ENCODE measurements at regions of chr22 and their contacts with region 1.

Region 1: GRCh38 chr22:28283068-28283654 is 364.1 kb upstream of the PITPNB start:
- DNase-seq: no peak
- ATAC-seq: peak in 2 of 4 donors; percentile 14 to 45
- H3K4me3 ChIP-seq: no peak overlapping the region
- H3K27ac ChIP-seq: no peak overlapping the region
- H3K4me1 ChIP-seq: peaks cover 0 to 27% (median 5%) of the 10 kb centered on the region in 12 donors
- H3K27me3 ChIP-seq: no peaks in the 10 kb centered on the region
- CTCF ChIP-seq: no peak
- POLR2A ChIP-seq: no peak

Region 2: DNA sequence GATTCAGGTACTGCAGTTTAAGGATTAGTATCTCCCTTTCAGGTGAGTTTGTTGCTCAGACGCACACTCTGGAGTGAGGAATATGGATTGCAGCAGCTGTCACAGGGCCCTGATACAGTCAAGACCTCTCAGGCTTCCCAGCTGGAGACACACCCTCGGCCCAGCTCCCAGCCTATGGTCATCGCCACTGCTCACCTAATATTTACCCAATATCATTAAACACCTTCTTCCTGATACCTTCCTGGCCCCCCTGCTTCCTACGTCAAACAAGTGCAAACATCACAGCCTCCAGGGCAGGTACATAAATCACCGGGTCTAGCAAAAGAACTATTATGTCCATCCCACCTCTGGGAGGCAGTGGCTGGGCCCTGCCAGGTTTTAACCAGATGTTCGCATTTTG is 694.9 kb before region 1 on chr22:
- intact Hi-C with region 1: no loop called
- DNase-seq: no peak
- ATAC-seq: no peak
- H3K4me3 ChIP-seq: no peak overlapping the region
- H3K27ac ChIP-seq: no peak overlapping the region
- H3K4me1 ChIP-seq: peaks cover 0 to 7% (median 0%) of the 10 kb centered on the region in 12 donors
- H3K27me3 ChIP-seq: no peaks in the 10 kb centered on the region
- CTCF ChIP-seq: no peak
- POLR2A ChIP-seq: no peak

Region 3: GRCh38 chr22:28268171-28268570 is 15.0 kb before region 1 on chr22:
- intact Hi-C with region 1: no loop called
- DNase-seq: no peak
- ATAC-seq: peak in 1 of 4 donors; percentile 18
- H3K4me3 ChIP-seq: no peak overlapping the region
- H3K27ac ChIP-seq: peak overlapping the region in 1 of 12 donors; percentile 37
- H3K4me1 ChIP-seq: peaks cover 0 to 30% (median 16%) of the 10 kb centered on the region in 12 donors
- H3K27me3 ChIP-seq: no peaks in the 10 kb centered on the region
- CTCF ChIP-seq: no peak
- POLR2A ChIP-seq: no peak

Region 4: DNA sequence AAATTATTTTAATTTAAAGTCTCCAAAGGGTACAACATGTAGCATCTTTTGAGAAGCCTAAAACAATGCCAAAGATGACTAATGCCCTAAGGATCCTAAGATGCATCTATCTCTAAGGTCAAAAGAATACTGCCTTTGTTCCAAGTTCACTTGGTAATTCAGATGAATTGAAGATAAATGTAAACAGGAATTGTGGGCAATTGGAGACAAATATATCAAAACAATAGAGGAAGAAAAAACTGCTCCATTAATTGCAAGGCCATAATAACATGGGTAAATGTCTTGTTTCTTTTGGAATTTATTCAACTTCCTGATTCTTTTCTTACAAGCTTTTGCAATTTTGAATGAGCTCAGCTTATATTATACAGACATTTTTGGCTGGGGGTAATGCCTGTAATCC is 57.8 kb after region 1 on chr22:
- intact Hi-C with region 1: loop called in 1 of 10 experiments (anchors 10 kb)
- DNase-seq: no peak
- ATAC-seq: peak in 1 of 4 donors; percentile 10
- H3K4me3 ChIP-seq: no peak overlapping the region
- H3K27ac ChIP-seq: no peak overlapping the region
- H3K4me1 ChIP-seq: peaks cover 0 to 31% (median 11%) of the 10 kb centered on the region in 12 donors
- H3K27me3 ChIP-seq: no peaks in the 10 kb centered on the region
- CTCF ChIP-seq: no peak
- POLR2A ChIP-seq: no peak

Region 5: DNA sequence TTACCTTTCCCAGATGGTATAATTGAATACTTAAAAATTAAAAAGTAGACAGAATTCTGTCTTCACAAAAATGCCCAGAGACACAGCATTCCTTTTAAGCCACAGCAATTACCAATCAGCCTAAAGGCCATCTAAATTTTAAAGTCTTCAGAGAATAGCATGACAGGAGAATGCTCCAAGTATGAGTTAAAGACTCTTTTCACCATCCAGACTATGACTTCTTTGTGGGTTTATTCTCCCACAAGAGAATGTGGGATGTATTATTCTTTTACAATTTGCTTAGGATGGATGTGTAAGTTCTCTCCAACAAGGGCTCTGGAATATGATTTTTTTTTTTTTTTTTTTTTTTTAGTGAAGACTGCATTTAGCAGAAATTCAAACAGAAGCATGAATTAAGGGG is 146.6 kb after region 1 on chr22:
- intact Hi-C with region 1: no loop called
- DNase-seq: no peak
- ATAC-seq: no peak
- H3K4me3 ChIP-seq: no peak overlapping the region
- H3K27ac ChIP-seq: no peak overlapping the region
- H3K4me1 ChIP-seq: peaks cover 4 to 36% (median 18%) of the 10 kb centered on the region in 12 donors
- H3K27me3 ChIP-seq: no peaks in the 10 kb centered on the region
- CTCF ChIP-seq: no peak
- POLR2A ChIP-seq: no peak

Measured in heart left ventricle (tissue), 16 donors.